ENCODE measurements at regions of chr18 and their contacts with region 1.

Region 1: DNA sequence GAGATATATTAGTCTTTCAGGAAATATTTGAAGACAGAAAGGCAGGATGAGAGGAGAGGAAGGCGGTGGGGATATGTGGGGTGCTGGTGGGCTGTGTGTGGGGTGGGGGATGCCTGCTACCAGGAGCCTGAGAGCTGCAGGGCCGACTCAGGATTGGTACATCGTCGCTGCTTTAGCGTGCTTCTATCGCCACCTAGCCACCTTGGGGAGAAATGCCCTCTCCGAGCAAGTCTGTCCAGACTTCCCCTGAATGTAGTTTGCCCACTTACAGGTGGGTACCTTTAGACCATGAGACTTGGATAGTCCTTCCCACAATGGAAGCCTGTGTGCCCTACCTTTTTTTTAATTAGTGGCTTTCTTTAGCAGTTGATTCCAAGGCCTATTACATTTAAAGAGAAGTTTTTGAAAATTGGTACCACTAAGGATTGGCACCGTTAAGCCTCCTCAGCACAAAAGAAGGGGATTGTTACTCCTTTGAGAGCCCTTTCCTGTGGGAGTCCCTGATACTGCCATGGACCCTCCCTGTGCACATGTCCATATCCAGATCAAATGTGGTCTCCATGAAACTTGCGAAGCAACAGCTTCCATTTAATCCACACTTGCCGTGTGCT is 114.1 kb upstream of the NDUFV2 start:
- DNase-seq: peak; percentile 28 to 38
- ATAC-seq: peak; percentile 58 to 86 (median 78)
- H3K4me3 ChIP-seq: no peak overlapping the region
- H3K27ac ChIP-seq: no peak overlapping the region
- H3K4me1 ChIP-seq: peaks cover 0 to 13% (median 0%) of the 10 kb centered on the region in 9 donors
- H3K27me3 ChIP-seq: no peaks in the 10 kb centered on the region
- CTCF ChIP-seq: peak; percentile 39 to 83 (median 73)

Region 2: GRCh38 chr18:8654503-8655451 is 333.6 kb before region 1 on chr18:
- intact Hi-C with region 1: loop called in 9 of 10 experiments (anchors 1 to 5 kb)
- DNase-seq: no peak
- ATAC-seq: no peak
- H3K4me3 ChIP-seq: no peak overlapping the region
- H3K27ac ChIP-seq: no peak overlapping the region
- H3K4me1 ChIP-seq: no peaks in the 10 kb centered on the region
- H3K27me3 ChIP-seq: peaks cover 0 to 14% (median 4%) of the 10 kb centered on the region in 7 donors
- CTCF ChIP-seq: peak; percentile 55 to 86 (median 77)

Region 3: DNA sequence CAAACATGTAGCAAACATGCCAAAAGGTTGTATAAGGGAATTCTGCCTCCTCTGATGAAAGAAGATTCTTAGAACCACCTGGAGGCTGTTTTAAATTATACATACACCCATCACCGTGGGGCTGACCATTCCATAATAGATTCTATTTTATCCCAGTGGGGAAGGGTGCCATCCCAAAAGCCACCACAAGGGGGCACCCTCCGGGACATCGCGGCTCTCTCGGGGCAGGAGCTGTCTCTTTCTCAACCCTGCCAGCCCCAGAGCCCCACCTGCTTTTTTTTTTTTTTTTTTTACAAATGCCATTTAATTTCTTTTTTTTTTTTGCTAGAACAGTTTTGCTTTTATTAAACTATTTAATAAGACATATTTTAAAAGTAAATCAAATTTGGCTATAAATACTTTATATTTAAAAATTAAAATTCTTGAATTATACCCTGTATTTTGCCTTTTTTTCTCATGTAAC is 291.6 kb before region 1 on chr18:
- intact Hi-C with region 1: loop called (anchors 1 to 5 kb)
- DNase-seq: peak; percentile 65 to 79
- ATAC-seq: peak; percentile 81 to 91 (median 88)
- H3K4me3 ChIP-seq: no peak overlapping the region
- H3K27ac ChIP-seq: no peak overlapping the region
- H3K4me1 ChIP-seq: no peaks in the 10 kb centered on the region
- H3K27me3 ChIP-seq: peaks cover 0 to 15% (median 0%) of the 10 kb centered on the region in 7 donors
- CTCF ChIP-seq: peak; percentile 86 to 95 (median 92)

Region 4: DNA sequence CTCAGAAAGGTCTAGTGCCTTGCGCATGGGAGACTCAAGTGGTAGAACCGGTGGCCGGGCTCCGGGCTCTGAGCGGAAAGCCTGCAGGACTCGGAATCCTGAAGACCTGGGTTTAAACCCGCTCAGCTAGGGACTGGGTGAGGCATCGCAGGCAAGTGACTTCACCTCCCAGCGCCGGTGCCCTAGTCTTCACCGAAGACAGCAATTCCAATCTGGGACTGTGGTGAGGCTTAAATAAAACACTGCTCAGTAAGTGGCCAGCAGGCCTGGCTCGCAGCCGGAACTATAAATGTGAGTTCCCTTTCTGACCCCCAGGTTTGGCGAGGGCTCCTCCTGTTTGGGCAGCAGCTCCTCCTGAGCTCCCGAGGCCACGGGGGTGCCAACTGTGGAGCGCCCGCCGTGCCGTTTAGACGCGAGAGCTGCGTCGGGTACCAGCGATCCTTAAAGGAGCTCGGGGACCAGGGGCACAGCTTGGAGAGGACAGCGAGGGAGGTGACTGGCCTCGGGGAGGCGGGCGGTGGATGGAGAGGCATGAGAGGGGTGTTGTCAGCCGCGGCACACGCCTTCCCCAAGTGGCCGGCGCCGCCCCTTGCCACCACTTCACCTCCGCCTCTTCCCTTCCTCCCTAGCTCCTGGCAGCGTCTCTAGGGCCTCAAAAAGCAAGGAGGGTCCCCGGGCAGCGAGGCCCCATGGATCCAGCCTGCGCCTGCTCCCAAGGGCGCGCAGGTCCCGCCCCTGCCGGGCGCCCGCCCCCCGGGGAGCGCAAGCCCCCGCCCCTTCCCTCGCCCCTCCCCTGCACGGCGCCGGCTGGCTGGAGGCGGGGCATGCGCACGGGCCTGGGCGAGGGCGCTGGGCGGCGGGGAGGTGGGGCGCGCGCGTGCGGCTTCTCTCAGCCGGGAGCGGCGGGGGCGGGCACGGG is 283.7 kb before region 1 on chr18:
- intact Hi-C with region 1: loop called in 3 of 10 experiments (anchors 2 to 5 kb)
- DNase-seq: peak; percentile 88 to 92
- ATAC-seq: peak; percentile 94 to 97 (median 96)
- H3K4me3 ChIP-seq: peak overlapping the region; percentile 37 to 85 (median 72)
- H3K27ac ChIP-seq: peak overlapping the region; percentile 76 to 98 (median 91)
- H3K4me1 ChIP-seq: peaks cover 8 to 31% (median 21%) of the 10 kb centered on the region in 9 donors
- H3K27me3 ChIP-seq: peaks cover 0 to 73% (median 0%) of the 10 kb centered on the region in 7 donors
- CTCF ChIP-seq: peak in 2 of 9 donors; percentile 4 to 8

Region 5: DNA sequence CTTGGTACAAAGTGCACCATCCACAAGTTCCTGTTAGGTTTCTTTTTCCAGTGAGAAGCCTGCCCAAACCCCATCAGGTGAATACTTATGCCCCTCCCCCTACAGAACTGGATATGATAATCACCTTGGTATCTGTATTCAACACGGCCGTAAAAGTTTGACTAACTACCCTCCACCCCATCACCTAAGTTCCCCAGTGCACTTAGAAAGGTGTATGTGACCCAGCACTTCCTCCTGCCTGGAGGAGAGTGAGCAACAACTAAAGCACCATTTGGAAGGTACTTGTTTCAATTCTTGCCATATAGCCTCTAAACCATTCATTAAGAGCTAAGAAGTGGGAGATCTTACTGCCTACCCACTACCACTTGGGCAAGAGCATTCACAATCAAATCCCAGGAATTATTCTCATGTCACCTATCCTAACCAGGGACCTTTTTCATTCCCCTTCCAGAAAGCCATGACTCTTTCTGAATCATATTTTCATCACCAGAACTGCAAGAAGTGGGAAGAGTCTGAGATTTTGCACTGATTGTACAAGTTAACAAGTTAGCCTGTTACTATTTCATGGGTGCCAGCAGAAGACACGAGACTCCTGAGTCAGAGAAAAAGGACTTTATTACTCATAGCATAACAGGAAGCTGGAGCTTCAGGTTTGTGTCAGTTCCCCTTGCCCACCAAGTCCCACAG is 60.6 kb after region 1 on chr18:
- intact Hi-C with region 1: loop called in 3 of 10 experiments (anchors 5 to 10 kb)
- DNase-seq: no peak
- ATAC-seq: no peak
- H3K4me3 ChIP-seq: no peak overlapping the region
- H3K27ac ChIP-seq: no peak overlapping the region
- H3K4me1 ChIP-seq: no peaks in the 10 kb centered on the region
- H3K27me3 ChIP-seq: no peaks in the 10 kb centered on the region
- CTCF ChIP-seq: no peak

Region 6: GRCh38 chr18:9055185-9055584 is 66.8 kb after region 1 on chr18:
- intact Hi-C with region 1: loop called in 2 of 10 experiments (anchors 10 kb)
- DNase-seq: no peak
- ATAC-seq: peak in 4 of 8 donors; percentile 23 to 66 (median 48)
- H3K4me3 ChIP-seq: no peak overlapping the region
- H3K27ac ChIP-seq: no peak overlapping the region
- H3K4me1 ChIP-seq: peaks cover 0 to 11% (median 0%) of the 10 kb centered on the region in 9 donors
- H3K27me3 ChIP-seq: no peaks in the 10 kb centered on the region
- CTCF ChIP-seq: peak in 6 of 9 donors; percentile 18 to 56 (median 44)